Activated CD8-positive, alpha-beta T cell treated with anti-CD3 and anti-CD28 coated beads, Interleukin-2, amount 10 ng/mL, durations not matched to agents 7 days and 5 days (primary cell): ENCODE measurements at regions of chr6 and their contacts with region 1.

Region 1: DNA sequence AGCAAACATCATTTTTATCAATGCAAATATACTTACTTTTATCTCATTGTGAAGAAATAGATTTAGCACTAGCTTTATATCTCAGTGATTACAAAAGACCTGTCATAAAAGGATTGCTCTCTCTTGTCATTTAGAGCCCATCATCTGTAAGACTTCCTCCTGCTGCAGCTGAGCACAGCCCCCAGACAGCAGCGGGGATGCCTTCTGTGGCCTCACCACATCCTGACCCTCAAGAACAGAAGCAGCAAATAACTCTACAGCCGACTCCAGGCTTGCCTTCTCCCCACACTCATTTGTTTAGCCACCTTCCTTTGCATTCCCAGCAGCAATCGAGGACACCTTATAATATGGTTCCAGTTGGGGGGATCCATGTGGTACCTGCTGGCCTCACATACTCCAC is 127.0 kb upstream of the EDN1 start:
- DNase-seq: peak; percentile 86
- ATAC-seq: peak; percentile 100
- H3K4me3 Mint-ChIP-seq: peak overlapping the region; percentile 43
- H3K27ac Mint-ChIP-seq: peak overlapping the region; percentile 80
- H3K4me1 Mint-ChIP-seq: peaks cover 40% of the 10 kb centered on the region
- H3K27me3 Mint-ChIP-seq: no peaks in the 10 kb centered on the region

Region 2: GRCh38 chr6:12233693-12234571 is 70.8 kb after region 1 on chr6:
- CTCF ChIA-PET with region 1: interaction called, 12 read pairs
- POLR2A ChIA-PET with region 1: interaction called, 4 read pairs
- DNase-seq: peak; percentile 54
- ATAC-seq: peak; percentile 79
- H3K4me3 Mint-ChIP-seq: peak overlapping the region; percentile 10
- H3K27ac Mint-ChIP-seq: peak overlapping the region; percentile 79
- H3K4me1 Mint-ChIP-seq: peaks cover 34% of the 10 kb centered on the region
- H3K27me3 Mint-ChIP-seq: no peaks in the 10 kb centered on the region